ENCODE measurements at regions of chr2 and their contacts with region 1.

Region 1: DNA sequence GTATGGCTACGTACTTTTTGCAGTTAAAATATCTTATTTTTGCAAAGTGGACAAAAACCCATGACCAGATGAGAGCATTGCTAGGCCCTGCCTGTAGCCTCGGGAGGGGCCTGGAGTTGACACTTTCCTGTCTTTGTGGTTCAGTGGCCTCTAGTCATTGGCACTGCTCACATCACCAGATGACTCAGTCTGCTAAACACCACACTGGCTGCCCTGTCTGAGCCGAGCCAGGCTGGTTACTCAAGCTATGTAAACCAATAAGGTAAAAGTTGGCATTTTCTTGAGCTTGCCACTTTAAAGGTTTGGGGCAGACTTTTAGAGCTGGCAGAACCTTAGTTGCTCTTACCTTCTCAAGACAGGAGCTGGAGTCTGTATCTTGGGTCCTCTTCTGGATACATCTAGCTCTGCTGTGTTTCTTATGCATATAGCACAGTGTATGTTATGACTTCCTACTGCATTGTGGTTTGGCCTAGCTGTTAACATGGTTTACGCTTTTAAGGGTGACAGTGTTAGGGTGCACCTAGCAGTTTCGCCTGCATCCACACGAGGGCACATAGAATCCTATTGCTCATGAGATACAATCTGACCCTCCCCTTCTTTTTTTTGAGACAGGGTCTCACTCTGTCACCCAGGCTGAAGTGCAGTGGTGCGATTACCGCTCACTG is 76.4 kb downstream of the AP1S3 start:
- DNase-seq: peak; percentile 47
- H3K4me3 ChIP-seq: no peak overlapping the region
- CTCF ChIP-seq: peak; percentile 34

Region 2: DNA sequence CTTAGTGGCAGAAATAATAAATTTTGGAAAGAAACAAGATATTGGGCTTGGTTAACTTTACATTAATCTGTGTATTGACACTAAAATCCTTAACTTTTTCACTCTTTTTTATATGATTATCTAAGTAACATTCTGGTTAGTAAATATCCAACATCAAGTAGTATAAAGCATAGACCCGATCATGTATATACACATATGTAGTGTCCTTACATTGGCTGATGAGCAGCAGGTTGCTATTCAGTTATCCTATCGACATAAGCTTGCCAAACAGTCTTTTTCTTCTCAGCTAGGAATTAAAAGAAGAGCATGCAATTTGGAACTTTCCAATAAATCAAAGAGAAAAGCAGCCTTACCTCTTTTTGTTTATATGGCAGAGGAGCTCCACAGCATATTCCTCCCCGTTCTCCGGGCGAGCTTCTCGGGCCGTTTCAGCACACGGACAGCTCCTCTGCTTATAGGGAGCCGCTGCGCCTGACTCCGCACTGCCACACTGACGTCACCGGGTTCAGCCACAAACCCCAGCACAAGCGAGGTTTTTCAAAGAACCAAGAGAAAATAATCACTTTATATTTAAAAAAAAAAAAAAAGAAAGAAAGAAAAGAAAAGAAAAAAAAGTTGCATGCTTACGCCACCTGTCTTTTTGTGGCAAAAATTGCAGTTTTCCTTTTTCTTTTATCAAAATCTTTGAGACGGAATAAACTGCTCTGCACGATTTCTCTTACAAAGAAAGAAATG is 158.9 kb before region 1 on chr2 and contains the start of gene SCG2:
- in situ Hi-C with region 1: no loop called
- DNase-seq: peak; percentile 93
- H3K4me3 ChIP-seq: peak within 1 kb of the TSS; percentile 26
- CTCF ChIP-seq: peak; percentile 36

Region 3: DNA sequence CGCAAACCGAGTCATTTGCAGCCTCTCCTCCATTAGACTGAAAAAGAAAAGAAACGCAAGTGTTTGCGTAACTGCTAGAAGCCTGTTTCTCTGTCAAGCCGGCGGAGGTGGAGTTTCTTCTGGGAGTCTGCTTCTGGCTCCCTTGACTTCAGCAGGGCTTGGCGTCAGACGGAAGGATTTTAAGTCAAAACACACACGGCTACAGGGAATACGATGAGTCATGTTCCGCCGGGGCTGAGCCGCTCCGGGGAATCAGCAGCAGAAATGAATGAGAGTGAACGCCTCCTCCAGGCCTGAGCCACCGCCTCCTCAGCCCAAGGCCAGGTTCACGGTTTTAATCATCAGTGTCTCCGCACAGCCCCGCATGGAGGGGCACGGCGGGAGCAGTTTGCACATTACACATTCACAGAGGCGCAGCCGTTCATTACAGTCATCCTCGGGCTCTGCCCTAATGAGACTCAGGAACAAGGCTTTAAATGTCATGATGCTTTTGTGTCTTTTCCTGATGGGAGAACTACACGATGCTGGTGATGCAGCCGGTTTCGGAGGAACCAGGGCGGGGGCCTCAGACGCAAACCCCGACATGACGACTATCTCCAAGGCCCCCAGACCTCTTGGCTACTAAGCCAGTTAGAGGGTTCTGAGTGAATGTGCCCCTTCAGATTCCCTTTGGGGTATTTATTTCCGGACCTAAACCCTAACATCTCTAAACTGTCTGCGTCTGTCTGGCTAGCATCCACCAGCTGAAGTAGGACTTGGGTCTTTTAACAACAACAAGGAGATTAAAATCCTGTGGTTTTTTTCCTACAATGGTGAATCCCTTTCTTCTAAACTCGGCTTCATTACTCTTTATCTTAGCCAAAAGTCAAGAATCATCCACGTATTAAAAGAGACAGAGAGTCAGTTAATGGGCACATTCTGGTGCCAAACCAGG is 147.7 kb before region 1 on chr2:
- in situ Hi-C with region 1: no loop called
- DNase-seq: peak; percentile 97
- H3K4me3 ChIP-seq: peak overlapping the region; percentile 26
- CTCF ChIP-seq: peak; percentile 4

Region 4: DNA sequence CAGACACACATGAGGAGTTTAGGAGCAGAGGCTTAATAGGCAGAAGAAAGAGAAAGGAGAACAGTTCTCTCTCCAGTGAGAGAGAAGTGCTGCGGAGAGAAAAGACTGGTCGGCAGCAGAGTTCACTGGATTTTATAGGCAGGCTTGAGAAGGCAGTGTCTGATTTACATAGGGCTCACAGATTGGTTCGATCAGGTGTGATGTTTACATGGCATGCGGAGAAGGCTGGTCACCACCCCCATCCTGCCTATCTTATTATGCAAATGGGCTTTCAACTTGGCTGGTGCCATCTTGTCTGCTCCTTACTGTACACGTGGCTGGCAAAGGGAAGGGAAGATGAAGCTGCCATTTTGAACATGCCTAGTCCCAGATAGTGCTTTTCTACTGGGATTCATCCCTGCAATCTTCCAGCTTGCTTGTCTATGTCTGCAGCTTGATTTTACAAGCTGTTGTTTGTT is 37.0 kb before region 1 on chr2:
- in situ Hi-C with region 1: no loop called
- DNase-seq: no peak
- H3K4me3 ChIP-seq: no peak overlapping the region
- CTCF ChIP-seq: no peak

Region 5: DNA sequence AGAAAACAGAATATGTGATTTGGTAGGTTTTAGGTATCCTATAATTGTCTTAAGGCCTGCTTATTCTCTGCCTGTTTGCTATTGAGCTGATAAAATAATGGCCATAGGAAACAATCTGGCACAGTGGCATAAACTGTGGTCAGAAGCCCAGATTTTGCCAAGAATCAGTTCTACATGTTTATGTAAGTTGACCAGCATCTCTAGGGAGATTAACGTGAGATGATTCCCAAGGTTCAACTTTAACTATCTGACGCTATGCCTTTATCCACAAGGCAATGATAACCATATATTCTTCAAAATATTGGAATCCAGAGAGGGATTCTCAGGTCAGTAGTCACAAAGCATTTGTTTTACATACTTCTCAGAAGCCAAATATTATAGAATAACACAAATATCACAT is 50.8 kb after region 1 on chr2:
- in situ Hi-C with region 1: loop called (anchors 5 kb)
- DNase-seq: peak; percentile 73
- H3K4me3 ChIP-seq: no peak overlapping the region
- CTCF ChIP-seq: no peak

Region 6: DNA sequence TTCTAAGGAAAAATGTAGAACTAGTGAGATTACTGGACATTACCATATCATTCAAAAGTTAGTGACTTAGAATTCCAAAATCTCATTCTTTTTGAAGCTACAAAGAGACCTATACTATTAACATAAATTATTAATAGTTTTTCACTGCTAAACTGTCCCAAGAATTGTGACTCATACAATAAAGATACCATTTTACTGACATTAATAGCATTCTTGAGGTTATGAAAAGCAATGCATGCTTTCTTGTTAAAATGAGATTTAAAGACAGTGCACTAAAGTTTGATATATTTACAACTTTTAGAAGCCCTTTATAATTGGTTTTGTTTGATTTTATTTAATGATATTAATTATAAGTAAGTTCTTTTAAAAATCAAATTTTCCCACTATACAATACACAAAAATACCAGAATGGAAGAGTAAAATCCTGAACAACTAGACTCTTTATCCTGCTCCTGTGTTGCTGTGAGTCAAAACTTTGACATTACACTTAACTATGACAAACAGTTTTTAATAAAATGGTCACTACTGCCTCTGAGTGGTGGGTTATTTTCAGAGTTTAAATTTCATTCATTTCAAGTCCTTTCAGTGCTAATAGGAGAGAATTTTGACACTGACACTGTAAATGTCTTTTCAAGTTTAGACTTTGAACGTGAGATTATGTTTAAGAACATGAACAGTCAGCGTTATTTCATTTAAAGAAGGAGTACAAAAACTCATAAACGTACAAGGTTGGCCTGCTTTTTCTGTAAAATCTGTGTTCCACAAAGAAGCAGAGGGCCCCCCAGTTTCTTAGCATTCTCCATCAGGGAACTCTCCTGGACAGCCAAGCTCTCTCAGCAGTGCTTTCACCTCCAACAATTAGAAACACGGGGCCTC is 586.4 kb after region 1 on chr2:
- in situ Hi-C with region 1: no loop called
- DNase-seq: no peak
- H3K4me3 ChIP-seq: no peak overlapping the region
- CTCF ChIP-seq: no peak

Measured in astrocyte of the cerebellum (primary cell).